CD8-positive, alpha-beta T cell (primary cell): ENCODE measurements at regions of chr4 and their contacts with region 1.

Region 1: DNA sequence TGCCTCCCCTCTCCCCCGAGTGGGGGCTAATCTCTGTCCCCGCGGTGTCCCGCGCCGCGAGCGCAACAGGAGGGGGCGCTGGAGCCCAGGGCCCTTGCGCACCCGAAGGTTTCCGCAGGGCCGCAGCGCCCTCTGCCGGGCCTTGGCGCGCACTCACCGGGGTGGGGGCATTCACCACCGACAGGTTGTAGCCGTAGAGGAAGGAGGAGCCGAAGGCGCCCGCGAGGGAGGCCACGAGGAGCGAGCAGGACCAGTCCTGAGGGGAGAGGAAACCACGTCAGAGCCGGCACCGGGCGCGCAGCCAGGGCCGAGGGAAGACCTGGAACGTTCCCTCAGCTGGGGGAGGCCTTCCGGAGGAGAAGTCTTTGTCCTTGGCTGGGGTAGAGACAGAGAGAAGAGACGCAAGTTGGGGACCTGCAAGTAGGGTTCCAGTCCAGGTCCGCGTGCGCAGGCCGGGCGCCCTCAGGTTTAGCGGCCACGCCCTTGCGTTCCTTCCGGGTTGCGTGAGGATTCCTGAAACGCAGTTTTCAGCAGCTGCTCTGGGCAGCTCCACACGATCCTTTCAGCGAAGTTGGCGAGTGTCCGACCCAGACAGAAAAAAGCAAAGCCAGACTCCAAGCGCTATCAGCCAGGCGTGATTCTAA is 2.4 kb downstream of the SLC2A9 start:
- DNase-seq: peak; percentile 74 to 96 (median 93)
- ATAC-seq: peak; percentile 99
- H3K4me3 ChIP-seq: peak overlapping the region; percentile 59 to 60
- H3K4me3 Mint-ChIP-seq: peak overlapping the region; percentile 87
- H3K27ac ChIP-seq: peak overlapping the region; percentile 66 to 76
- H3K27ac Mint-ChIP-seq: peak overlapping the region; percentile 95
- H3K4me1 ChIP-seq: peaks cover 11% of the 10 kb centered on the region
- H3K4me1 Mint-ChIP-seq: peaks cover 12% of the 10 kb centered on the region
- H3K27me3 ChIP-seq: peaks cover 0 to 2% of the 10 kb centered on the region in 2 experiments
- H3K27me3 Mint-ChIP-seq: no peaks in the 10 kb centered on the region
- CTCF ChIP-seq: peak; percentile 96

Region 2: DNA sequence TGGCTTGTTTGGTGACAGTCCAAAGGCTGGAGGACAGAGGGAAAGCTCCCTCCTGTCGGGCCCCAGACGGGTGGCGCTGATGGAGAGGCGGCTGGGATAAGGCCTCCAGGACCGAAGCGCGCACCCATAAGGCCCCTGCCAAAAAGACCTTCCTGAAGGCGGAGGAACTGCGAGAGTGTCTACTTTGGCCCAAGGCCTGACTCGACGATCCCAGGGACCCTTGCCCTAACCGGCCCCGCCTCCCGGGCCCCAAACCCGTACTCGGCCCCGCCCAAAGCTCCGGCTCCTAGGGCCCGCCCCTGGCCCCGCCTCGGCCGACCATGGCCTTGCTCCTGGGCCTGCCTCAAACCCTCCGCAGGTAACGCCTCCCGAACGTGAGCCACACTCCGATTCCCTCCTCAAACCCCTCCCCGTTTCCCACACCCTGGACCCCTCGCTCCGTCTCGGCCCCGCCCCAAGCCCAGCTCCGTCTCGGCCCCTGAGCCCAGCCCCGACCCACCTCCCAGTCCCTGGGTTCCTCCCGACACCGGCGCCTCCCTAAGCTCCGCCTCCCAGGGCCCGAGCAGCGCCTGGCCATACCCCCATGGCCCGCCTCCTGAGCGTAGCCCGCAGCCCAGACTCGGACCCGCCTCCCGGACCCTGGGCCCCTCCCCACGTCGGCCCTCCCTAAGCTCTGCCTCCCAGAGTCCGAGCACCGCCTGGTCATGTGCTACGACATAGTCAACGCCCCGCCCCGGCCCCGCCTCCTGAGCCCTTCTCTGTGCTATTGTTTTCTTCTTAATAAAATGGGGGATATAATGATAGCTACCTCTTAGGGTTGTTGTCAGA is 327.5 kb before region 1 on chr4:
- CTCF ChIA-PET with region 1: no interaction called
- POLR2A ChIA-PET with region 1: interaction called, 6 read pairs
- intact Hi-C with region 1: loop called in 1 of 2 experiments (anchors 1 kb)
- DNase-seq: peak; percentile 79 to 96 (median 89)
- ATAC-seq: peak; percentile 99
- H3K4me3 ChIP-seq: peak overlapping the region; percentile 72 to 75
- H3K4me3 Mint-ChIP-seq: peak overlapping the region; percentile 88
- H3K27ac ChIP-seq: peak overlapping the region; percentile 55 to 76
- H3K27ac Mint-ChIP-seq: peak overlapping the region; percentile 76
- H3K4me1 ChIP-seq: peaks cover 8% of the 10 kb centered on the region
- H3K4me1 Mint-ChIP-seq: peaks cover 28% of the 10 kb centered on the region
- H3K27me3 ChIP-seq: no peaks in the 10 kb centered on the region
- H3K27me3 Mint-ChIP-seq: no peaks in the 10 kb centered on the region
- CTCF ChIP-seq: no peak

Region 3: GRCh38 chr4:9704551-9705332 is 314.2 kb before region 1 on chr4:
- CTCF ChIA-PET with region 1: no interaction called
- POLR2A ChIA-PET with region 1: no interaction called
- intact Hi-C with region 1: loop called in 1 of 2 experiments (anchors 2 kb)
- DNase-seq: no peak
- ATAC-seq: no peak
- H3K4me3 ChIP-seq: no peak overlapping the region
- H3K4me3 Mint-ChIP-seq: no peak overlapping the region
- H3K27ac ChIP-seq: no peak overlapping the region
- H3K27ac Mint-ChIP-seq: no peak overlapping the region
- H3K4me1 ChIP-seq: peaks cover 6% of the 10 kb centered on the region
- H3K4me1 Mint-ChIP-seq: peaks cover 11% of the 10 kb centered on the region
- H3K27me3 ChIP-seq: no peaks in the 10 kb centered on the region
- H3K27me3 Mint-ChIP-seq: no peaks in the 10 kb centered on the region
- CTCF ChIP-seq: no peak

Region 4: GRCh38 chr4:9762823-9763475 is 256.0 kb before region 1 on chr4:
- CTCF ChIA-PET with region 1: interaction called, 7 read pairs
- POLR2A ChIA-PET with region 1: no interaction called
- intact Hi-C with region 1: loop called in 1 of 2 experiments (anchors 2 kb)
- DNase-seq: peak in 4 of 9 experiments; percentile 12 to 54 (median 32)
- ATAC-seq: no peak
- H3K4me3 ChIP-seq: no peak overlapping the region
- H3K4me3 Mint-ChIP-seq: no peak overlapping the region
- H3K27ac ChIP-seq: no peak overlapping the region
- H3K27ac Mint-ChIP-seq: no peak overlapping the region
- H3K4me1 ChIP-seq: no peaks in the 10 kb centered on the region
- H3K4me1 Mint-ChIP-seq: no peaks in the 10 kb centered on the region
- H3K27me3 ChIP-seq: no peaks in the 10 kb centered on the region
- H3K27me3 Mint-ChIP-seq: peaks cover 8% of the 10 kb centered on the region
- CTCF ChIP-seq: no peak

Region 5: DNA sequence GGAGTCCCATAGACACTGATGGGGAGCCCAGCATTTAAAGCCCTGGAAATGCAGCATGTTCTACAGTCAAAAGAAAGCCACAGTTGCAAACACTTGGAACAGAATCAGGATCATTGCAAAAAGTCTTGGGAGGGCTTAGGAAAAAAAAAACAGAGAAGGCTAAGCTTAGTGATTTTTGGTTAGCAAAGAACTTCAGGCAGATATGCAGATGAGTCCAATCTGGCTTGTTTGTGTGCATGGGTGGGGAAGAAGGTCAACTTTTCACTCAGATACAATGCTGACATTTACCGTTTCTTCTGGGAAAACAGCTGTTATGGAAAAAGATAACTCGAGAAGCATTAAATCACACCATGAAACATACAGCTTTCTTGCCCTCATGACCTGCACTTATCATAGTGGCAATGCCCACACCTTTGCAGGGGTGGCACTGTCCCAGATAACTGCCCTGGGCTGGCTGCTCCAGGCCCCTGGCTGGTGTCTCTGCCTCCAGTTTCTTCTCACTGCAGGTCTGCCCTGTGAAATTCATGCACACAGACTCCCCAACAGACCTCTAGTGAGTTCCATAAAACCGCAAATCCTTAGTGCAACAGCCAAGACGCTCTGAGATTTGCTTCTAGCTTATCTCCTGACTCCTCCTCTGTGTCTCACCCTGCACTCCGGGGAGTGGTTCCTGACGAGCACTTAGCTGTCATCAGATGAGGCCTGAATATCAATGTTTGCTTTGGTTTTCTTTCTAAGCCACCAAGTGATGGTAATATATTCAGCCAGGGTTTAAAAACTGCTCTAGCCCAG is 138.3 kb before region 1 on chr4:
- CTCF ChIA-PET with region 1: no interaction called
- POLR2A ChIA-PET with region 1: no interaction called
- intact Hi-C with region 1: no loop called
- DNase-seq: no peak
- ATAC-seq: no peak
- H3K4me3 ChIP-seq: no peak overlapping the region
- H3K4me3 Mint-ChIP-seq: no peak overlapping the region
- H3K27ac ChIP-seq: no peak overlapping the region
- H3K27ac Mint-ChIP-seq: no peak overlapping the region
- H3K4me1 ChIP-seq: no peaks in the 10 kb centered on the region
- H3K4me1 Mint-ChIP-seq: no peaks in the 10 kb centered on the region
- H3K27me3 ChIP-seq: no peaks in the 10 kb centered on the region
- H3K27me3 Mint-ChIP-seq: no peaks in the 10 kb centered on the region
- CTCF ChIP-seq: no peak

Region 6: DNA sequence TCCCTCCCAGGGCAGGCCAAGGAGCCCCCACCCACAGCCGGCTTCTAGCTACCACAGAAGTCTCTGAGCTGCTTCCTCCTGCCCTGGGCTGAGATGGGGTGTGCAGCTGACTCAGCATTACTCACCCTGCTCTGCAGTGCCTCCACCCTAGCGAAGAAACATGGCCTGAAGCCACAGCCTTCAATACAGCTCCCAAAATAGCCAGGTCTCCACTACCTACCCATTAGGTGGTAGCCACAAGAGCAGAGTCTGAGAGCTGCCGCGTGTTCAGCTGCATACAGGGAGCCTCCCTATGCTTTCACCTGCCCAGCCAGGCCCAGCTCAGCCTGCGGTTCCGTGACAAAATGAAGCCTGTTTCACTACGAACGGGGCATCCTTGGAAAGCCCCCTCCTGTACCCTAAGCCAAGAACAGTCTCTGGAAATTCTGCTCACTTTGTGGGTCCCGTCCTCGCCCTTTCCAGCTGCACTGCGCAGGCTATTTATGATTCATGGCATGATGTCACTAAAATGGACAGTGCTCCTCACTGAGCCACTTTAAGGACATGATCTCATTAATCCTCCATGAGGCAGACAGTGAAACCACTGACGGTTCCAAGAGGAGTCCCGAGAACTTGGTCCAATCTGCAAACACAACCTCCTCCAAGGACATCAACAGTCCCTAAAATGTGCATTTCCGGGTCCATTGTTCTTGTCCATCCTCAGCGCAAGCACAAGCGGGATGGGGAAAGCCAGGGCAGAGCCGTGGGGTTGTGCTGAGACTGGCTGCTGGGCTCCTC is 77.4 kb after region 1 on chr4:
- CTCF ChIA-PET with region 1: no interaction called
- POLR2A ChIA-PET with region 1: interaction called, 4 read pairs
- intact Hi-C with region 1: loop called in 1 of 2 experiments (anchors 5 kb)
- DNase-seq: peak; percentile 46 to 90 (median 83)
- ATAC-seq: peak; percentile 75
- H3K4me3 ChIP-seq: no peak overlapping the region
- H3K4me3 Mint-ChIP-seq: peak overlapping the region; percentile 37
- H3K27ac ChIP-seq: peak overlapping the region; percentile 38 to 70
- H3K27ac Mint-ChIP-seq: peak overlapping the region; percentile 87
- H3K4me1 ChIP-seq: peaks cover 94% of the 10 kb centered on the region
- H3K4me1 Mint-ChIP-seq: peaks cover 94% of the 10 kb centered on the region
- H3K27me3 ChIP-seq: no peaks in the 10 kb centered on the region
- H3K27me3 Mint-ChIP-seq: no peaks in the 10 kb centered on the region
- CTCF ChIP-seq: no peak

Region 7: DNA sequence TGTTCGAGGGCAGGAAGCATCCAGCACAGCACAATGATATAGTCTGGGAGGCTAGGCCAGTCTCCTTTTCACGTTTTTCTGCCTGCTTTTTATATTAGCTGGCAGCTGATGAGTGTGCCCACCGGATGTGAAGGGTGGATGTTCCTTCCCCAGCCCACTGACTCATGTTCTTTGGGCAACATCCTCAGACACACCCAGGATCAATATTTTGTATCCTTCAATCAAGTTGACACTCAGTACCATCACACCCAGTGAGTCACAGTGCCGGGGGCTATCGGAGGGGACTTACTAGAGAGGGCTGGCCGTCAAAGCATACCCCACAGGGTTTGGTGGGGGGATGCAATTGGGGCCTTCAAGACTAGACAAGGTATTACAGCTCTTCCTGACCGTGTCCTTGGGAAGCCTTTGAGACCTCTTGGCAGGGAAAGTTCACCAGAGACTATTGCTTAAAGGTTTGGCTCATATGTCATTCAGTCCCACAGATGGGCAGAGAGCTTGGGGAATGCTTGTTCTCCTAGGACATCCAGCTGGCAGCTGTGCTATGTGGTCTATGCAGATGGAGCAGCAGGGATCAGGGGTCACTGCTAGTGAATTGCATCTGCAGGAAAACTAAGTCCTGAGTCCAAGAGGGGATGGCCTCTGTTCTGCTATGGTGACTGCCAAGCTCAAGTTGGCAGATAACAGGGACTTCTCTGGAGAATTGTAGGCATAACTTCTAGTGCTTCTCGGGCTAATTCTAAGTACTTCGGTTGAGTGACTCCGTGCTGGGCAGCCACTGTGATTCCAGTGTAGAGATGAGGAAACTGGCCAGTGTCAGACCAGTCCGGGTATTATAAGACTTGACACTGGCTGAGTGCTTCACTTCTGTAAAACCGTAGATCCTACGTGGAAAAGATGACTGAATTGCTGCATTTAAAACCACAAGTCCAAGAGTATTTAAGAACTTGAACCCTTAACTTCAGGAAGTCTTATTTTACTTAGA is 110.5 kb after region 1 on chr4:
- CTCF ChIA-PET with region 1: no interaction called
- POLR2A ChIA-PET with region 1: no interaction called
- intact Hi-C with region 1: no loop called
- DNase-seq: no peak
- ATAC-seq: no peak
- H3K4me3 ChIP-seq: no peak overlapping the region
- H3K4me3 Mint-ChIP-seq: no peak overlapping the region
- H3K27ac ChIP-seq: no peak overlapping the region
- H3K27ac Mint-ChIP-seq: no peak overlapping the region
- H3K4me1 ChIP-seq: peaks cover 5% of the 10 kb centered on the region
- H3K4me1 Mint-ChIP-seq: peaks cover 8% of the 10 kb centered on the region
- H3K27me3 ChIP-seq: no peaks in the 10 kb centered on the region
- H3K27me3 Mint-ChIP-seq: no peaks in the 10 kb centered on the region
- CTCF ChIP-seq: no peak